Calu3 (cell line): ENCODE measurements at regions of chr3 and their contacts with region 1.

Region 1: GRCh38 chr3:49802719-49803464 is at the start of gene INKA1:
- DNase-seq: peak; percentile 88
- H3K4me3 Mint-ChIP-seq: peak within 1 kb of the TSS; percentile 63
- H3K27ac Mint-ChIP-seq: peak within 1 kb of the TSS; percentile 2
- H3K4me1 Mint-ChIP-seq: peaks cover 12% of the 10 kb centered on the region
- H3K27me3 Mint-ChIP-seq: peaks cover 39% of the 10 kb centered on the region
- CTCF ChIP-seq: peak; percentile 76
- total RNA-seq, gene INKA1: 0.35 TPM in 1 of 2 replicates, not detected in the other

Region 2: GRCh38 chr3:49839193-49839809 is 36.4 kb after region 1 on chr3:
- CTCF ChIA-PET with region 1: interaction called, 17 read pairs
- intact Hi-C with region 1: loop called (anchors 5 kb)
- DNase-seq: peak; percentile 73
- H3K4me3 Mint-ChIP-seq: no peak overlapping the region
- H3K27ac Mint-ChIP-seq: no peak overlapping the region
- H3K4me1 Mint-ChIP-seq: peaks cover 9% of the 10 kb centered on the region
- H3K27me3 Mint-ChIP-seq: no peaks in the 10 kb centered on the region
- CTCF ChIP-seq: peak; percentile 54

Region 3: GRCh38 chr3:49906004-49906743 is 103.3 kb after region 1 on chr3:
- CTCF ChIA-PET with region 1: interaction called, 8 read pairs
- intact Hi-C with region 1: loop called (anchors 5 kb)
- DNase-seq: peak; percentile 65
- H3K4me3 Mint-ChIP-seq: peak overlapping the region; percentile 54
- H3K27ac Mint-ChIP-seq: peak overlapping the region; percentile 80
- H3K4me1 Mint-ChIP-seq: peaks cover 24% of the 10 kb centered on the region
- H3K27me3 Mint-ChIP-seq: no peaks in the 10 kb centered on the region
- CTCF ChIP-seq: peak; percentile 68